ENCODE measurements at regions of chr14 and their contacts with region 1.

Region 1: DNA sequence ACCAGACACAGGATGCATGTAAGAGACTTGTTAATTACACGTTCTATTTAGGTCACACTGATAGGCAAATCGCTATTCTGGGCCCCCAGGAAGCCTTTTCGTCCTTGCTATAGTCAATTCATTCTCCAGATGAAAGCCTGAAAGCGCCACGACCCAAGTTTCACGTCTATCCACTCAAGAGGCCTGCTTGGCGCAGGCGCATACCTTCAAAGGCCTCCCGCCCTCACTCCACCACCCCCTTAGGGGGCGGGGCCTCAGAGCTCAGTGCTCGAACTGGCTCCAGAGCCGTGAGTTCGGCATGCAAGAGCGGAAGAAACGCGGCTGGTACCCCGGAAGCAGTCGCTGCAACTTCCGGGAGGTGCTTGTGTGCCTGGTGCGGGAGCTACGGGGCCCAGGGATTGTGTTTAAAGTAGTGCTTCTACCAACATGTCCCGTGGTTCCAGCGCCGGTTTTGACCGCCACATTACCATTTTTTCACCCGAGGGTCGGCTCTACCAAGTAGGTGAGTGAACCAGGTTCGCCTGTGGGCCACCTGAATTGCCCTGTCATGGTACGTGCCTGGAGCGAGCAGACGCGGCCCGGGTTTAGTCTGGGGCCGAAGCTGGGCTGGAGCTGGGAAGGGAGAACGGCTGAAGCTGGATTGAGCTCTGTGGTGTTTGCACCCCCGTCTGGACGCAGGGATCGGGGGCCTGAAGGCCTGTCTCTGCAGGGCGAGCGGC is at the start of gene PSMA6:
- DNase-seq: peak; percentile 100
- H3K4me3 Mint-ChIP-seq: peak within 1 kb of the TSS; percentile 96
- H3K27ac Mint-ChIP-seq: peak within 1 kb of the TSS; percentile 92
- H3K4me1 Mint-ChIP-seq: peaks cover 42% of the 10 kb centered on the region
- H3K27me3 Mint-ChIP-seq: no peaks in the 10 kb centered on the region
- total RNA-seq, gene PSMA6: 235 to 242 TPM

Region 2: GRCh38 chr14:35121887-35122695 is 170.1 kb before region 1 on chr14 and contains the starts of genes PPP2R3C and PRORP:
- CTCF ChIA-PET with region 1: interaction called, 4 read pairs
- POLR2A ChIA-PET with region 1: interaction called, 18 read pairs
- DNase-seq: peak; percentile 92
- H3K4me3 Mint-ChIP-seq: peak within 1 kb of the TSS; percentile 91
- H3K27ac Mint-ChIP-seq: peak within 1 kb of the TSS; percentile 98
- H3K4me1 Mint-ChIP-seq: peaks cover 59% of the 10 kb centered on the region
- H3K27me3 Mint-ChIP-seq: no peaks in the 10 kb centered on the region
- total RNA-seq, gene PPP2R3C: 51.7 to 59.4 TPM
- total RNA-seq, gene PRORP: 43.3 to 44.9 TPM

Region 3: DNA sequence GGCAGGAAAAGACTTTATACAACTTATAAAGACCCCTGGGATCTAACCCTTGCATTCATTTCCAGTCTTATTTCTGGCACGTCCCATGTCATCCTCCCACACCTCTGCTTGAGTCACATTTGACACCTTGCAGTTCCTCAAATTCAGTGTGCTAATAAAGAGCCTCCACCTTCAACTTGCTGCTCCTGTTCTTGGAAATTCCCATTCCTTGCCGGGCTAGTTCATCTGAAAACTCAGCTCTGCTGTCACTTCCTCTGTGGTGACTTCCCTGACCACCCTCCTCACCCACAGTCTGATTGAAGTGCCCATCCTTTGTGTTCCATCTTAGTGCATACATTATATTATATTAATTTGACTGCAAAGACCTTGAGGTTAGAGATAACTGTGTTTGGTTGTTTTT is 37.5 kb before region 1 on chr14:
- CTCF ChIA-PET with region 1: no interaction called
- POLR2A ChIA-PET with region 1: no interaction called
- DNase-seq: peak; percentile 18
- H3K4me3 Mint-ChIP-seq: no peak overlapping the region
- H3K27ac Mint-ChIP-seq: no peak overlapping the region
- H3K4me1 Mint-ChIP-seq: peaks cover 19% of the 10 kb centered on the region
- H3K27me3 Mint-ChIP-seq: no peaks in the 10 kb centered on the region

Region 4: GRCh38 chr14:35320472-35320871 is 28.3 kb after region 1 on chr14:
- CTCF ChIA-PET with region 1: interaction called, 3 read pairs
- POLR2A ChIA-PET with region 1: interaction called, 14 read pairs
- DNase-seq: no peak
- H3K4me3 Mint-ChIP-seq: no peak overlapping the region
- H3K27ac Mint-ChIP-seq: no peak overlapping the region
- H3K4me1 Mint-ChIP-seq: peaks cover 10% of the 10 kb centered on the region
- H3K27me3 Mint-ChIP-seq: no peaks in the 10 kb centered on the region

Region 5: DNA sequence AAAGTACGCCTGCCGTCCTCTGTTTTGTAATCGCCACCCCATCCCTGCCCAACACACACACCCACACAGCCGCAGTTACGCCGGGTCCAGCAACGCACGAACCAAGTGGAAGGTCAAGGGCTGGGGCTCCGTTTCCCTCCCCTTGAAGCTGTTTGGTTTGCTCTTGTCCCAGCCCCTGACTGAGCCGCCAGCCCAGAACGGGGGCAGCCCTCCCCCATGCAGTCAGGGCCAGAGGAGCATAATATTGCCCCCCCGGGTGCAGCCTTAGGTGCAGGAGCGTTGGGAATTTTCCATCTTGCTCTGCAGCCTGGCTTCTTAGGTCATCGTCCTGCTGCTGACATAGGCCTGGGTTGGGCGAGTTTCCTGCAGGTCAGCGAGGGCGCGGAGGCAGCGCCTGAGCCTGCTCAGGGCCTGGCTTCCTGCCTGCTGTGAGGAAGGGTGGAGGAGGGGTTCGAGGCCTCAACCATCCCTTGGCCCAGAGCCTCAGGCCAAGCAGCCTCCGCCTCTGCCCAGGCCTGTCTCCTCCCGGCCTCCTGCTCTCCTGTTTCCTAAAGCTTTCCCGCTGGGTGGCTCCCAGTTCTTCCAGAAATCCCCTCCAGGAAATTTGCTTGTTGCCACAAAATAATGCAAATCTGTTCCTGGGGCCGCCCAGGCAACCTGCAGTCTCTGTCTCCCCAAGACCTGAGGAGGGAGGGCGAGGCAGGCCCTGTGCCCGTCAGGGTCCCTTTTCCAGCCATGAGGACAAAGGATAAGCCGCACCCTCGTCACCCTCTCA is 44.5 kb after region 1 on chr14:
- CTCF ChIA-PET with region 1: no interaction called
- POLR2A ChIA-PET with region 1: interaction called, 20 read pairs
- DNase-seq: no peak
- H3K4me3 Mint-ChIP-seq: no peak overlapping the region
- H3K27ac Mint-ChIP-seq: no peak overlapping the region
- H3K4me1 Mint-ChIP-seq: peaks cover 30% of the 10 kb centered on the region
- H3K27me3 Mint-ChIP-seq: no peaks in the 10 kb centered on the region

Region 6: GRCh38 chr14:35416108-35416750 is 124.0 kb after region 1 on chr14:
- CTCF ChIA-PET with region 1: interaction called, 5 read pairs
- POLR2A ChIA-PET with region 1: interaction called, 12 read pairs
- DNase-seq: peak; percentile 62
- H3K4me3 Mint-ChIP-seq: peak overlapping the region; percentile 18
- H3K27ac Mint-ChIP-seq: peak overlapping the region; percentile 75
- H3K4me1 Mint-ChIP-seq: peaks cover 47% of the 10 kb centered on the region
- H3K27me3 Mint-ChIP-seq: no peaks in the 10 kb centered on the region